ENCODE measurements at regions of chr11 and their contacts with region 1.

Region 1: DNA sequence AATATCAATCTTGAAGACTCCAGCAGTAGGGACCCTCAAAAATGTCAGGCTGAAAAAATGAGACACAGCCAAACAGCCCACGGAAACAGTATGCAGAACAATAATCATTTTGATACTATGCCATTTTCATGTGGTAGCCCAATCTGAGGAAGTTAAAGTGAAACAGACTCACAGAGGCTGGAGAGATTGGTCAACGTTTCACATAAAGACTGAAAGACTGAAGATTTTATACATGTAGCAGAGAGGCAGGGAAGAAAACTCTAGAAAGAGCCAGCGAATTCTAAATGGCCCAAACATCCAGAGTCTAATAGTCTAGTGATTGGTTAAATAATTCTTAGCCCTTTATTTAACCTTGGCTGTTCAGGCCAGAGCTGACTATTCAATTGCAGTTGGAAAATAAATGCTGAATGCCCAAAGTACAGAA is 49.4 kb downstream of the MAML2 start:
- DNase-seq: no peak
- ATAC-seq: peak; percentile 68
- H3K4me3 Mint-ChIP-seq: no peak overlapping the region
- H3K27ac Mint-ChIP-seq: peak overlapping the region; percentile 1
- H3K4me1 Mint-ChIP-seq: peaks cover 77% of the 10 kb centered on the region
- H3K27me3 Mint-ChIP-seq: no peaks in the 10 kb centered on the region

Region 2: DNA sequence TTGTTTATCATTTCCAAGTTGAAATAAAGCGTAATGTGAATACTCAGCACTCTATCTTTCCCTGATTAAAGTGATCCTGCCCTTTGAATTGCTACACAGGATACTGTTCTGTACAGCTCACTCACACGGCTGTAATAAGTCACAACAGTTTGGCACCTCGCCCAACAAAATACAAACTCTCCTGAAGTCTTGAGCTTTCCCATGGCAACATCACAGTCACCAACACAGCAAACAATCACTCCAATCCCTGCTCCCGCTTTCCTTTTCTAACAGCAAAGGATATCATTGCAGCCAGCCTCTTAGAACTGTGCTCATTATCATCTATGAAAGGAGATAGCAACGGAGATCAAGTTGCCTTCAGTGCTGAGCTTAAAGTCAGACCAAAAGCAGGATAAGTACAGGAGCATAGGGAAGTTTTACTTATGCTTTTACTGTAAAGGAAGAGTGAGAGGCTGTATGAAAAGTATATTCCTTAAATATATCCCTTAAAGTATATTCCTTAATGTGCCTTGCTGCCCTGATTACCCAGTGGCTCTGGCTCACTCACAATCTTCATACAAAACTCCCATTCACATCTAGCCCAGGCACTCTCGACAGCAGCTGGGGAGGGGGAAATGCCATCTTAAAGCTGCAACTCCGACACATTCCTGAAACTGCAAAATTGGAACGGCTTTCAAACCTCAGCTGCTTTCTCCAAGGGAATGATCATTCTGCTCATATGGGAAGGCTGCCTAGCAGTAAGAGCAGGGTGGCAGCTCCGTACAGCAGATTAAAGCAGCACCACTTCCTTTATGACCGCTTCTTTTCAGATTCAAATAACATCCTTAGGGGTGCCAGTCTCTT is 13.5 kb after region 1 on chr11:
- CTCF ChIA-PET with region 1: interaction called, 7 read pairs
- POLR2A ChIA-PET with region 1: no interaction called
- intact Hi-C with region 1: loop called in 1 of 2 experiments (anchors 2 kb)
- DNase-seq: peak; percentile 48
- ATAC-seq: peak; percentile 42
- H3K4me3 Mint-ChIP-seq: peak overlapping the region; percentile 39
- H3K27ac Mint-ChIP-seq: peak overlapping the region; percentile 58
- H3K4me1 Mint-ChIP-seq: peaks cover 79% of the 10 kb centered on the region
- H3K27me3 Mint-ChIP-seq: no peaks in the 10 kb centered on the region

Region 3: GRCh38 chr11:96579656-96580055 is 286.0 kb after region 1 on chr11:
- CTCF ChIA-PET with region 1: no interaction called
- POLR2A ChIA-PET with region 1: no interaction called
- intact Hi-C with region 1: no loop called
- DNase-seq: no peak
- ATAC-seq: no peak
- H3K4me3 Mint-ChIP-seq: no peak overlapping the region
- H3K27ac Mint-ChIP-seq: no peak overlapping the region
- H3K4me1 Mint-ChIP-seq: no peaks in the 10 kb centered on the region
- H3K27me3 Mint-ChIP-seq: no peaks in the 10 kb centered on the region